ENCODE measurements at regions of chr1 and their contacts with region 1.

Region 1: GRCh38 chr1:32291708-32292492 is at the start of gene HDAC1:
- DNase-seq: peak; percentile 99 to 100 (median 99)
- ATAC-seq: peak; percentile 99
- H3K4me3 ChIP-seq: peak within 1 kb of the TSS; percentile 67 to 96
- H3K27ac ChIP-seq: peak within 1 kb of the TSS; percentile 78 to 91 (median 86)
- H3K4me1 ChIP-seq: peaks cover 29% of the 10 kb centered on the region
- H3K27me3 ChIP-seq: no peaks in the 10 kb centered on the region
- CTCF ChIP-seq: peak in 1 of 7 experiments; percentile 9
- POLR2A ChIP-seq: peak; percentile 51 to 81 (median 79)
- total RNA-seq, gene HDAC1: 32.7 to 50.4 TPM

Region 2: GRCh38 chr1:32239790-32240139 is 52.1 kb before region 1 on chr1:
- intact Hi-C with region 1: loop called (anchors 10 kb)
- DNase-seq: peak; percentile 28 to 55 (median 41)
- ATAC-seq: peak; percentile 4
- H3K4me3 ChIP-seq: peak overlapping the region in 1 of 2 donors; percentile 75
- H3K27ac ChIP-seq: peak overlapping the region; percentile 83 to 95 (median 90)
- H3K4me1 ChIP-seq: peaks cover 46% of the 10 kb centered on the region
- H3K27me3 ChIP-seq: no peaks in the 10 kb centered on the region
- CTCF ChIP-seq: no peak
- POLR2A ChIP-seq: no peak